Endothelial cell of umbilical vein (primary cell): ENCODE measurements at regions of chr11 and their contacts with region 1.

Region 1: DNA sequence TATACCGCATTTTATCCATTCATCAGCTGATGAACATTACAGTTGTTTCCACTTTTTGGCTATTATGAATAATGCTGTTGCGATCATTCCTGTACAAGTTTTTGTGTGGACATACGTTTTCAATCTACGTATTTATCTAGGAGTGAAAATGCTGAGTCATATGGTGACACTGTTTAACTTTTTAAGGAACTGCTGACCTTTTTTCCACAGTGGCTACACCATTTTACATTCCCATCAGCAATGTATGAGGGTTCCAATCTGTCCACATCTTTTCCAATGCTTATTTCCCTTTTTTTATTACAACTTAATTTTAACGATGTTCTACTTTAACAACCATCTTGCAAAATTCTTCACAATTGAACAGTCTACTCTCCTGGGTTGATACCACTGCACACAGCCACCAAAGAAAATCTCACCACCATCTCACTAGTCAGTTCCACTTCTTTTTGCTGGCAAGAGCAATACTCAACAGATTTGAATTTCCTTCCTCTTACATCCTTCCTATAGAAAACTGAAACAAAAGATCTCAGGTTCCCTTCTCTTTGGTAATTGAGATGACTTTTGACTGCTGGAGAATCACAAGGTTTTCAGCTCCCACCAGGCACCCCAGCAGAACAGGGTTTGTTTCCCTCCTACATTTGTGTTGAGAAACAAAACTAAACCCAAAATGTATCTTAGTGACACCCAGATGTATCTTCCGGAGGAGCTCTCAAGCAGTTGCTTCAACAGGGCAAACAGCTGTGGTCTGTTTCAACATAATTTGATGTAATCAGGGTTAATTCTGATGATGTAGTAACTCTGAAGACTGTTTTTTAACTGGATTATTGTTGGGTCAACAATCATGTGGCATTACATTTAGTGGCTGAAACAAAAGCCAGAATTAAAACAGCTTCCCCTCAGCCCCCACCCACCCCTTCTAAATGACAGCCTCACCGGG is 7.0 kb upstream of the GAB2 start:
- DNase-seq: peak; percentile 44
- H3K4me3 ChIP-seq: no peak overlapping the region
- H3K27ac ChIP-seq: no peak overlapping the region
- H3K4me1 ChIP-seq: peaks cover 26% of the 10 kb centered on the region
- H3K27me3 ChIP-seq: no peaks in the 10 kb centered on the region
- CTCF ChIP-seq: no peak
- POLR2A ChIP-seq: no peak

Region 2: DNA sequence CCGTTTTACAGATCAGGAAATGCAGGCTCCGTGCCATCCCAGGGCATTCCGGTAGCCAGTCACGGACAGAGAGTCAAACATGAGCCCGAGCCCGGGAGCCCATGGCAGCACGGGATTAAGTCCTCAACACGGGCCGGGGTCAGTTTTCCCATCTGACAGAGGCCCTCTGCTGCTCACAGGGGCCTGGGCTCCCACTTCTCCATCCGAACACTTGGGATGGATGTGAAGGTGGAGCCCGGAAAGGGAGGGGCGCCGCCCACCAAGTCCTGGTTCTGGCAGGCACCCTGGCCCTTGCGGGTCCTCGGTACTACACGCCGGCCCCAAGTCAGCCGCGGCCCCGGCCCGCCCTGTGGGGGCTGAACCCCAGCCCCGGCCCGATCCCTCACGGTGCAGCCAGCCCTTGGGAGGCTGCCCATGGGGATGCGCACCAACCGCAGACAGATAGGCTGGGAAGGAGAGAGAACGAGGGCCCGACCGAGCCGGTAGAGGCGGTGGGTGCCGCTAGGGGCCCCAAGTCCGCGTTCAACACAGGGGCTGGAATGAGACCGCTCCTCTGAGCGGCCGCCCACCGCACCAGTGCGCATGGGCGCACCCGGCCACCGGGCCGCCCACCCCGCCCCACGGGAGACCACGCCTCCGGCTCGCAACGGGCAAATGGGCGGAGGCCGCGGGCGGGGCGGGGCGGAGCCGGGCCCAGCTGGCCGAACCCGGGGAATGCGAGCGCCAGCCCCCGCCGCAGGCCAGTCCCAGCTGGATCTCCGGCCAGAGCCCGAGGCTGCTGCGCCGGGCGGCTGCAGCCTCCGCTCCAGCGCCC is 1358.2 kb before region 1 on chr11 and contains the start of gene CAPN5:
- CTCF ChIA-PET with region 1: no interaction called
- POLR2A ChIA-PET with region 1: no interaction called
- dilution Hi-C with region 1: no loop called
- intact Hi-C with region 1: no loop called
- DNase-seq: peak; percentile 95
- H3K4me3 ChIP-seq: peak within 1 kb of the TSS; percentile 48 to 75 (median 62)
- H3K27ac ChIP-seq: no peak within 1 kb of the TSS
- H3K4me1 ChIP-seq: peaks cover 11% of the 10 kb centered on the region
- H3K27me3 ChIP-seq: no peaks in the 10 kb centered on the region
- CTCF ChIP-seq: peak; percentile 44 to 58
- POLR2A ChIP-seq: peak; percentile 98
- total RNA-seq, gene CAPN5: 14.3 and 15.0 TPM in 2 replicates

Region 3: DNA sequence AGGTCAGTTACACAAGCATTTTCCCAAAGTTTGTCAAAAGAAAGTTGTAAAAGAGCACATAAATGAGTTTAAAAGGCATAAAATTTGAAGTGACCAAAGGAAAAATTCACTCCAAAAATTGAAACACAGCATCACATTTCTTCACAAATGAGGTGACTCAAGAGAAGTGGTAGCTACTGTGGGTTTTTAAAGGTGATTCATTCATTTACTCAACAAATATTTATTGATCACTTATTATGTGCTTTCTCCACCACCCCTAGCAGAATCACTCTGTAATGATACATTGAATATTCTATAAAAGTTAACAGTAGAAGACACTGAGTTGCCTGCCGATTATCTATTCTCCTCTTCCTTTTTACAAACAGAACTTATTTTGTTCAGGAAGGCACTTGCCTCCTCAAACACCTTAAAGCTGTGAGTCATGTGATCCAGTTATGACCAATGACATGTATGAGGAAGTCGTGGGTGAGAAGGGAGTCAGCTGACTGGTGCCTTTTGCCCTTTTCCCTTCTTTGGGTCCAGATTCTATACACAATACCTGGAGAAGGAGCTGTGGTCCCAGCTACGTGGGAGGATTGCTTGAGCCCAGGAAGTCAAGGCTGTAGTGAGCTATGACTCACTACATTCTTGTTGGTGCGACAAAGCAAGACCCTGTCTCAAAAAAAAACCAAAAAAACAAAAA is 719.3 kb before region 1 on chr11:
- CTCF ChIA-PET with region 1: no interaction called
- POLR2A ChIA-PET with region 1: no interaction called
- dilution Hi-C with region 1: no loop called
- intact Hi-C with region 1: no loop called
- DNase-seq: peak; percentile 5
- H3K4me3 ChIP-seq: no peak overlapping the region
- H3K27ac ChIP-seq: no peak overlapping the region
- H3K4me1 ChIP-seq: no peaks in the 10 kb centered on the region
- H3K27me3 ChIP-seq: no peaks in the 10 kb centered on the region
- CTCF ChIP-seq: no peak
- POLR2A ChIP-seq: no peak

Region 4: GRCh38 chr11:78188286-78189173 is 236.1 kb before region 1 on chr11 and contains the starts of genes KCTD21 and USP35:
- CTCF ChIA-PET with region 1: no interaction called
- POLR2A ChIA-PET with region 1: no interaction called
- dilution Hi-C with region 1: no loop called
- intact Hi-C with region 1: loop called (anchors 2 kb)
- DNase-seq: peak; percentile 98
- H3K4me3 ChIP-seq: peak within 1 kb of the TSS; percentile 68 to 81 (median 71)
- H3K27ac ChIP-seq: peak within 1 kb of the TSS; percentile 14
- H3K4me1 ChIP-seq: peaks cover 40% of the 10 kb centered on the region
- H3K27me3 ChIP-seq: no peaks in the 10 kb centered on the region
- CTCF ChIP-seq: no peak
- POLR2A ChIP-seq: peak; percentile 90
- total RNA-seq, gene KCTD21: 8.5 and 9.5 TPM in 2 replicates
- total RNA-seq, gene USP35: 10.3 and 12.4 TPM in 2 replicates

Region 5: GRCh38 chr11:78514922-78515502 is 90.4 kb after region 1 on chr11:
- CTCF ChIA-PET with region 1: no interaction called
- POLR2A ChIA-PET with region 1: no interaction called
- dilution Hi-C with region 1: no loop called
- intact Hi-C with region 1: no loop called
- DNase-seq: no peak
- H3K4me3 ChIP-seq: no peak overlapping the region
- H3K27ac ChIP-seq: no peak overlapping the region
- H3K4me1 ChIP-seq: peaks cover 8% of the 10 kb centered on the region
- H3K27me3 ChIP-seq: no peaks in the 10 kb centered on the region
- CTCF ChIP-seq: no peak
- POLR2A ChIP-seq: no peak